Transverse colon (tissue), 4 donors: ENCODE measurements at regions of chr7 and their contacts with region 1.

Region 1: DNA sequence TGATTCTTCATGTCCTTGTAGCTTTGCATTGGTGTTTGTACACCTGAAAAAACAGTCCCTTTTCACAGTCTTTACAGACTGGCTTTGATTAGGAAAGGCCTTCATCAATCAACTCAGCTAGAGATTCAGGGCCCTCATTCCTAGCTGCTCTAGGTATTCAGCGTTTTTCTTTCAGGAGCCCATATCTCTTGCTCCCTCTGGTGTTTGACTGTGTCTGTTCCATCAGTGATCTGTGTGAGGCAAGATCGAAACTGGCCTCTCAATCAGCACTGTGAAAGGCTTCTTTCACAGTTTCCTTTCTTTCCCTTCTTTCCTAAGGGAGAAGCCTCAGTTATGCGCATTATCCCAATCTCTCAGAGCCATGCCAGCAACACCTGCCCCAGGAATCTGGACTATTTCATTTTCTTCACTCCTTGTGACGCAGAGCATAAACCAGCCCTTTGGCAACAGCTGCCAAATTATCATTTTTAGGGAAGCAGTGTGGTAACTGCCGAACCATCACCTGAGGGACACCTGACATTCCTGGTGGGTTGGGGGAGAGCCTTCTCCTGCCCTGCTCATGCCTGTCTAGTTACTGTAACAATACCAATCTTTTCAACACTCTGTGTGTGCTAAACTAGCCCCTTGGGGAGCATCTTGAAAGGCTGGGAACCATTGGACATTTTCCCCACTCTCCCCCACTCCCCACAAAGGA is 75.7 kb upstream of the CCDC71L start:
- DNase-seq: peak; percentile 27
- H3K4me3 ChIP-seq: no peak overlapping the region
- H3K27ac ChIP-seq: peak overlapping the region in 1 of 4 donors; percentile 29
- H3K4me1 ChIP-seq: peaks cover 0 to 4% (median 2%) of the 10 kb centered on the region in 4 donors
- H3K27me3 ChIP-seq: no peaks in the 10 kb centered on the region
- CTCF ChIP-seq: peak; percentile 51 to 76 (median 59)
- EP300 ChIP-seq: no peak
- POLR2A ChIP-seq: no peak

Region 2: GRCh38 chr7:106176414-106177299 is 560.0 kb before region 1 on chr7:
- in situ Hi-C with region 1: loop called in 2 of 4 experiments (anchors 10 to 25 kb)
- intact Hi-C with region 1: no loop called
- DNase-seq: peak; percentile 85
- H3K4me3 ChIP-seq: no peak overlapping the region
- H3K27ac ChIP-seq: no peak overlapping the region
- H3K4me1 ChIP-seq: peaks cover 0 to 8% (median 3%) of the 10 kb centered on the region in 4 donors
- H3K27me3 ChIP-seq: no peaks in the 10 kb centered on the region
- CTCF ChIP-seq: peak; percentile 94 to 96 (median 94)
- EP300 ChIP-seq: no peak
- POLR2A ChIP-seq: no peak

Region 3: DNA sequence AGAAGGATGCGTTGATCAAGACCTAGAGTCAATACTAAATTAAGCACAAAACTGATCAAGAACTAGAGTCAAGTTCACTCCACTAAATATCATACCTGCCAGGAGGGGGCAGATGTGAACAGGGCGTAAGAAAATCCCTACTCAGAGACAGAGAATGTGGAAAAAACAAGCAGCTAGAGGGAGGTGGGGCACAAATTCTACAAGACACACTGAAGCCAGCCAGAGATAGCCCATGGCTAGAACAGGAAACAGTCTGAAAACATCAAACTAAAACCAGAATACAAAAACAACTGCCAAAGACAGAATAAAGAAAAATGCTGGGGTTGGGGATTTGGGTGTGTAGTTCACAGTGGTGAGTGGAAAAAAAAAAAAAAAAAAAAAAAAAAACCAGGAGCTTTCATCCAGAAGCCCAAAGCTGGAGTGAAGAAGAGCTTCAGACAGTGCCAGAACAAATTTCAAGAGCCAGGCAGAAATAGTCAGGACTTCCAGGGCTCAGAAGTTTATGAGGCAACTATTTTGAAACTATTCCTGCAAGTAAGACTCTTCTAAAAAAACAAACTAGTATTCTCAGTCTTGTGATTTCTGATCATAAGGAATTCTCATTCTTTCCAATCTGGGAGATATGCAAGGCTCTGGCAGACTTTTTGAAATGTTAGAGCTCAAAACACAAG is 194.0 kb before region 1 on chr7:
- in situ Hi-C with region 1: loop called (anchors 5 to 25 kb)
- intact Hi-C with region 1: no loop called
- DNase-seq: peak; percentile 73
- H3K4me3 ChIP-seq: no peak overlapping the region
- H3K27ac ChIP-seq: peak overlapping the region; percentile 50 to 74 (median 66)
- H3K4me1 ChIP-seq: peaks cover 0 to 16% (median 4%) of the 10 kb centered on the region in 4 donors
- H3K27me3 ChIP-seq: no peaks in the 10 kb centered on the region
- CTCF ChIP-seq: peak; percentile 61 to 93 (median 70)
- EP300 ChIP-seq: no peak
- POLR2A ChIP-seq: no peak

Region 4: GRCh38 chr7:106659963-106660861 is 76.4 kb before region 1 on chr7:
- in situ Hi-C with region 1: loop called in 2 of 4 experiments (anchors 5 to 10 kb)
- intact Hi-C with region 1: no loop called
- DNase-seq: peak; percentile 85
- H3K4me3 ChIP-seq: peak overlapping the region; percentile 89 to 99 (median 90)
- H3K27ac ChIP-seq: peak overlapping the region; percentile 93 to 99 (median 98)
- H3K4me1 ChIP-seq: peaks cover 12 to 29% (median 16%) of the 10 kb centered on the region in 4 donors
- H3K27me3 ChIP-seq: no peaks in the 10 kb centered on the region
- CTCF ChIP-seq: peak; percentile 62 to 92 (median 75)
- EP300 ChIP-seq: no peak
- POLR2A ChIP-seq: peak; percentile 37

Region 5: DNA sequence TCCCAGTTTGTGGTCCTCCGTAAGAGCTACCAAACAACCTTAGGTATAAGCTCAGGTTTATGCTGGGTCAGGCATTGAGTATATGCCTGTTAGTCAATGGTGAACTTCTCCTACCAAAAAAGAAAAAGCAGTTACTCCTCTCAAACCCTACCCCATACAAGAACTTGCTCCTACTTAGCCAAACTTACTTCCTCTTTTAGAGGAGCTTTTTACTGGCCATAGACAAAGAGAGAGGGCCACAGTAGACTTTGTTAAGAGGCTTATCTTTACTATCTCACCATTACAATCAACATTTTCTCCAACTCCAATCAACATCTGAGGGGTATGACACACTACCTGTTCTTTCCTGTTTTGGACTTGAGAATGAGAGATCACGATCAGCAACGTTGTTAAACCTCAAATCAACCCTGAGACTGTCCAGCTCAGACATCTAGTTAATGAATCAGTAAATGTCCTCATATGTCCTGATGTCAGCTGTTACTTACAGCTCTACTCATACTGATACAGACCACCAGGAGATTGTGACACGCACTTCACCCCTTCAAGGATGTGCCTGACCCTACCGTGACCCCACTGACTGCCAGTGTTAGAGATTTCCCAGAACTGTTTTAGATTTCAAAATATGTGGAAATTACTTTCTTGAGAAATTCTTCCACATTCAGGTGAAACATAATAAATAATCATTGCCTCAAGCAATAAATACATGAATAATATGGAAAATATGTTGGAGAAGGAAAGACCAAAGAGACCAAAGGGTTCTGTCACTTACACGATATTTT is 57.3 kb before region 1 on chr7:
- in situ Hi-C with region 1: no loop called
- intact Hi-C with region 1: loop called (anchors 10 kb)
- DNase-seq: no peak
- H3K4me3 ChIP-seq: no peak overlapping the region
- H3K27ac ChIP-seq: no peak overlapping the region
- H3K4me1 ChIP-seq: no peaks in the 10 kb centered on the region
- H3K27me3 ChIP-seq: no peaks in the 10 kb centered on the region
- CTCF ChIP-seq: no peak
- EP300 ChIP-seq: no peak
- POLR2A ChIP-seq: no peak